ENCODE measurements at regions of chr17 and their contacts with region 1.

Region 1: DNA sequence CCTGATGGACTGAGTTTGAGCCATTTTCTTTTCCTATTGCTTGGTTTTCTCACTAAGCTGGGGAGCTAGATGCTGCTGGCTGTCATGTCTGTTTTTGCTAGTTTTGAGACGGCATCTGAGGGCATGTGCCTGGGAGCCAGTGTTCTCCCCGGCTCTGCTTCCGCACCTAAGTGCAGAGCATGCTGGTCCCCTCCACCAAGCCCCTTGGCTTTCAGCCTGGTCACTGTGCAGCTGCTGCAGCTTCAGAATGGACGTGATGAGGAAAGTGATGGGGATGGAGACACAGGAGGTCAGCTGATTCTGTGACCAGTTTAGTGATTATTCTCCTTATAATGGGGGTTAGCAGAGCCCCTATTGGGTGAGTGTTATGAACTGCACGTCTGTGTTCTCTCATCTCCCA is 28.5 kb downstream of the DNAH17 start:
- DNase-seq: no peak
- H3K4me3 ChIP-seq: no peak overlapping the region
- H3K27ac ChIP-seq: no peak overlapping the region
- H3K4me1 ChIP-seq: no peaks in the 10 kb centered on the region
- H3K27me3 ChIP-seq: no peaks in the 10 kb centered on the region
- CTCF ChIP-seq: no peak
- POLR2A ChIP-seq: no peak

Region 2: GRCh38 chr17:78570921-78571694 is 22.4 kb after region 1 on chr17:
- intact Hi-C with region 1: loop called (anchors 1 kb)
- DNase-seq: no peak
- H3K4me3 ChIP-seq: no peak overlapping the region
- H3K27ac ChIP-seq: no peak overlapping the region
- H3K4me1 ChIP-seq: no peaks in the 10 kb centered on the region
- H3K27me3 ChIP-seq: no peaks in the 10 kb centered on the region
- CTCF ChIP-seq: no peak
- POLR2A ChIP-seq: no peak

Measured in breast epithelium (tissue), 4 donors.